ENCODE measurements at regions of chr2 and their contacts with region 1.

Region 1: GRCh38 chr2:70861777-70862625 is 26.4 kb upstream of the CD207 start:
- DNase-seq: peak; percentile 82
- ATAC-seq: peak; percentile 87
- H3K4me3 Mint-ChIP-seq: no peak overlapping the region
- H3K27ac Mint-ChIP-seq: no peak overlapping the region
- H3K4me1 Mint-ChIP-seq: peaks cover 3% of the 10 kb centered on the region
- H3K27me3 Mint-ChIP-seq: peaks cover 28% of the 10 kb centered on the region
- CTCF ChIP-seq: peak; percentile 99

Region 2: GRCh38 chr2:70789304-70790135 is 72.5 kb before region 1 on chr2:
- CTCF ChIA-PET with region 1: interaction called, 71 read pairs
- POLR2A ChIA-PET with region 1: no interaction called
- intact Hi-C with region 1: no loop called
- DNase-seq: peak; percentile 87
- ATAC-seq: peak; percentile 80
- H3K4me3 Mint-ChIP-seq: peak overlapping the region; percentile 61
- H3K27ac Mint-ChIP-seq: no peak overlapping the region
- H3K4me1 Mint-ChIP-seq: peaks cover 14% of the 10 kb centered on the region
- H3K27me3 Mint-ChIP-seq: peaks cover 50% of the 10 kb centered on the region
- CTCF ChIP-seq: peak; percentile 83

Region 3: DNA sequence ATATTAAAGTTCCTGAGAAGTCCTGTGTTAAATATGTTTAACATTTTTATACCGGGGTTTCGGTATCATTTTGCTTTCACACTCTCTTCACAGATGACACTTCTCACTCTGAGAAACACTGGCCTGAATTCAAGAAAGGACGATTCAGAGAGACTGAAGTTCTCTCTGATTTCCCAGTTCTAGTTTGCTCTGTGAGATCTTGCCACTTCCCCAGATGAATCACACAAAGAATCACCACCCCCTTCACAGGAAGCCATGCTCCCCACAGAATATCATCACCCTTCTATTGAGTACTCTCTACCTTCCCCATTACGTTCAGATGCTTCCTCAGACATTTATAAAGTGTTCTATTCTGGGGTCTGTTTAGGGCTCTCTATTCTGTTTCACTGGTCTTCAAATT is 10.3 kb before region 1 on chr2:
- CTCF ChIA-PET with region 1: interaction called, 57 read pairs
- POLR2A ChIA-PET with region 1: no interaction called
- intact Hi-C with region 1: no loop called
- DNase-seq: peak; percentile 70
- ATAC-seq: peak; percentile 98
- H3K4me3 Mint-ChIP-seq: peak overlapping the region; percentile 5
- H3K27ac Mint-ChIP-seq: peak overlapping the region; percentile 77
- H3K4me1 Mint-ChIP-seq: peaks cover 30% of the 10 kb centered on the region
- H3K27me3 Mint-ChIP-seq: no peaks in the 10 kb centered on the region
- CTCF ChIP-seq: no peak

Region 4: DNA sequence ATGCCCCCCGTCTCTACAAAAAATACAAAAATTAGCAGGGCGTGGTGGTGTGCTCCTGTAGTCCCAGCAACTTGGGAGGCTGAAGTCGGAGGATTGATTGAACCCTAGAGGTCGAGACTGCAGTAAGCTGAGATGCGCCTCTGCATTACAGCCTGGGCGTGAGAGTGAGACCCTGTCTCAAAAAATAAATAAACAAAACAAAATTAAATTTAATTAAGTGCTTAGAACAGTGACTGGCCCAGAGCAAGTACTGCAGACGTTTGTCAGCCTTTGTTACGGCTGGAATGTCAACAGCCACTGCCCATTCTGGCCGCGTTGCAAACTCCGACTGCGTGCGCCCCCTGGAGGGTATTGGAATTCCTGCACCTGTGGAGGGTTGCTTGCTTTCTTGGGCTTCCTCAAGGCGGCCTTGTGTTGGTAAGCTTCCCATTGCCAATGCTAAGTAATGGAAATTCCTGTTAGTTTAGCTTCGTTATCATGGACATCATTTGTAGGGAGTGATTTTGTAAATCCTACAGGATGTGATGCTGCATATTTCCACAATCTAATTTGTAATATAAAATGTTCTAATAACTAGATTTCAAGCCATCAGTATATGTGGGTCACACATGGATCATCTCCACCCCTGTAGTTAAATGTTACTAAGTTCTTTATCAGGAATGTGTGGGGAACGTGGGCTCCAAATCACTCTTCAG is 57.8 kb after region 1 on chr2:
- CTCF ChIA-PET with region 1: interaction called, 135 read pairs
- POLR2A ChIA-PET with region 1: interaction called, 3 read pairs
- intact Hi-C with region 1: no loop called
- DNase-seq: peak; percentile 84
- ATAC-seq: peak; percentile 90
- H3K4me3 Mint-ChIP-seq: no peak overlapping the region
- H3K27ac Mint-ChIP-seq: no peak overlapping the region
- H3K4me1 Mint-ChIP-seq: no peaks in the 10 kb centered on the region
- H3K27me3 Mint-ChIP-seq: peaks cover 17% of the 10 kb centered on the region
- CTCF ChIP-seq: peak; percentile 90

Measured in activated CD8-positive, alpha-beta T cell treated with anti-CD3 and anti-CD28 coated beads for 36 hours (primary cell).